Activated CD8-positive, alpha-beta T cell treated with anti-CD3 and anti-CD28 coated beads, Interleukin-2, amount 10 ng/mL, durations not matched to agents 7 days and 5 days (primary cell): ENCODE measurements at regions of chr11 and their contacts with region 1.

Region 1: DNA sequence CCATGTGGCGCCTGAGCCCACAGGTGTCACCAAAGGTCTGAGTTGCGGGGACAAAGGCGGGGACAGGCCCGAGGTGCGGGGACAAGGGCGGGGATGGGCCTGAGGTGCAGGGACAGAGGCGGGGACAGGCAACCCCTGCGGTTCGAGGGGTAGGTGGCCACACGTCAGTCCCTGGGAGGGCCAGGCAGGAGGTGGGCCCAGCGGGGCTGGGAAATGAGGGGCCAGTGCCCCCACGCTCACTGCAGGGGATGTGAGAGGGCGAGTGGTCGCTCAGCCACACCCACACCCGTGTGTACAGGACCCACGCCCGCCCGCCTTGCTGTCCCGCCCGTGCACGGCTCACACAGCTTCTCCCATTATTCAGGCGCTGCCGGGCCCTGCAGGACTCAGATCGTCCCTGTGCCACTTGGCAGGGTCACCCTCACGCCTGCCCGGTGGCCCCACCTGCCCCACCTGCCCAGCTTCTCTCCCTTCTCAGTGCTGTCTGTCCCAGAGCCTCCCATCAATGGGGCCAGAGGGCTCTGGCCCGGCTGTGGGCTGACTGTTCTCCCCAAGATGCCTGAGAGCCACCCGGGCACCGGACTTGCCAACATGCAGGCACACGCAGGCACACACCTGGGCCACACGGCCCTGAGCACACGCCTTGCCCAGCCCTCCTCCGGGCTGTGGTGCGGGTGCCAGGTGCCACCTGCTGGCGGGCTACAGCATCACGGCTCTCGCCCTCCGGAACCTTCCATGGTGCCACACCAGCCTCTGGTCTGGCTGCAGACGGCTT is 14.2 kb upstream of the MUC6 start:
- DNase-seq: peak; percentile 80
- ATAC-seq: peak; percentile 99
- H3K4me3 Mint-ChIP-seq: no peak overlapping the region
- H3K27ac Mint-ChIP-seq: peak overlapping the region; percentile 34
- H3K4me1 Mint-ChIP-seq: peaks cover 2% of the 10 kb centered on the region
- H3K27me3 Mint-ChIP-seq: peaks cover 10% of the 10 kb centered on the region

Region 2: GRCh38 chr11:848380-848931 is 202.3 kb before region 1 on chr11:
- CTCF ChIA-PET with region 1: interaction called, 28 read pairs
- POLR2A ChIA-PET with region 1: no interaction called
- DNase-seq: peak; percentile 75
- ATAC-seq: peak; percentile 64
- H3K4me3 Mint-ChIP-seq: no peak overlapping the region
- H3K27ac Mint-ChIP-seq: no peak overlapping the region
- H3K4me1 Mint-ChIP-seq: peaks cover 17% of the 10 kb centered on the region
- H3K27me3 Mint-ChIP-seq: peaks cover 5% of the 10 kb centered on the region

Region 3: DNA sequence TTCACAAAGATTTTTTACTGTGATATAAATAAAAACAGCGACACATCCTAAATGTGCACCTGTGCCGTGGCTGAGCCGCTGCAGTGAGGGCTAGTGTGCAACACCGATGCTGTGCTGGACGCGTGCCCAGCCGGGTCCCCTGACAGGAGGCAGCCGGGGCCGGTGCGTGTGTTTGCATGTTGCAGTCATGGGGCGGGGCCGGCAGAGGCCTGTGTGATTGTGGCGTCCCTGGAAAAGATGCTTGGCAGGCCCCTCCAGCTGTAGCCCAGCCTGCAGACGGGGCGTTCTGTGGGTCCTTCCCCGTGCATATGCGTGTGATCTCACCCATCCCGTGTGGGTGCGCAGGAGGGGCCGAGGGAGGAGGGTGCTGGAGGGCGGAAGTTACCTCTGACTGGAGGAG is 44.8 kb before region 1 on chr11:
- CTCF ChIA-PET with region 1: no interaction called
- POLR2A ChIA-PET with region 1: no interaction called
- DNase-seq: no peak
- ATAC-seq: no peak
- H3K4me3 Mint-ChIP-seq: no peak overlapping the region
- H3K27ac Mint-ChIP-seq: no peak overlapping the region
- H3K4me1 Mint-ChIP-seq: no peaks in the 10 kb centered on the region
- H3K27me3 Mint-ChIP-seq: no peaks in the 10 kb centered on the region

Region 4: GRCh38 chr11:1039481-1040427 is 11.0 kb before region 1 on chr11:
- CTCF ChIA-PET with region 1: no interaction called
- POLR2A ChIA-PET with region 1: no interaction called
- DNase-seq: no peak
- ATAC-seq: no peak
- H3K4me3 Mint-ChIP-seq: no peak overlapping the region
- H3K27ac Mint-ChIP-seq: no peak overlapping the region
- H3K4me1 Mint-ChIP-seq: no peaks in the 10 kb centered on the region
- H3K27me3 Mint-ChIP-seq: no peaks in the 10 kb centered on the region